Endothelial cell of umbilical vein (primary cell): ENCODE measurements at regions of chr2 and their contacts with region 1.

Region 1: DNA sequence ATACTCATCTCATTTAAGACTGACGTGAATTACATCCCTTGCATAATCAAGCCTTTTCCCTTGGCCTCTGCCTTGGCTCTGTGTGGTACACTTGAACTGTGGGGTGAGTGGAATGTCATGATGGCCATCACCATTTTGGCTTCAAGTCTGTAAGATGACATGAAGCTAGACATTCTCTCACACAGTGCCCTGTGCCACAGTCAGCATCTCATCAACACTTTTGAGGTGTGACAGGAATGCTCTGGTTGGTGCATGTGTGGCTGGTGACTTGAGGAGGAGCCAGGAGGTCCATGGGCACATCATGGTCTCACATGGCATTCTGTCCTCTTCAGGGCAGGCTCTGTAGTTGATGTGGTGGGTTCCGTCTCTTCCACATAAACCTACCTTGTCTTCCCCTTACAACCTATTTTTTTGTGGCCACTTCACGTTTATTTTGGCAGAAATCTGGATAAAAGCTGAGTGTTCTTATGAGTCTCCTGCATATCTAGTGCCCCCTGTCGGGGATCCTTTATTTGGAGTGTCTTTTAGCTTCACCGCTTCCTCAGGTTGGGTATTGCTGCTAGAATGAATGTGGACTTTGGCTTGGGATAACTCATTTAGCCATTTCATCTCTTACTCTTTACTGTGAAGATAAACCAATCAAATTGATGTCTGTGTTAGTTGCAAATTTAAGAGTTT is 28.1 kb downstream of the MAP4K4 start:
- DNase-seq: no peak
- H3K4me3 ChIP-seq: no peak overlapping the region
- H3K27ac ChIP-seq: no peak overlapping the region
- H3K4me1 ChIP-seq: peaks cover 3% of the 10 kb centered on the region
- H3K27me3 ChIP-seq: no peaks in the 10 kb centered on the region
- CTCF ChIP-seq: peak in 1 of 2 donors; percentile 10
- POLR2A ChIP-seq: no peak

Region 2: GRCh38 chr2:101613056-101613704 is 112.5 kb before region 1 on chr2:
- CTCF ChIA-PET with region 1: no interaction called
- POLR2A ChIA-PET with region 1: no interaction called
- dilution Hi-C with region 1: no loop called
- intact Hi-C with region 1: no loop called
- DNase-seq: no peak
- H3K4me3 ChIP-seq: no peak overlapping the region
- H3K27ac ChIP-seq: no peak overlapping the region
- H3K4me1 ChIP-seq: no peaks in the 10 kb centered on the region
- H3K27me3 ChIP-seq: peaks cover 0 to 2% of the 10 kb centered on the region in 2 experiments
- CTCF ChIP-seq: no peak
- POLR2A ChIP-seq: no peak

Region 3: DNA sequence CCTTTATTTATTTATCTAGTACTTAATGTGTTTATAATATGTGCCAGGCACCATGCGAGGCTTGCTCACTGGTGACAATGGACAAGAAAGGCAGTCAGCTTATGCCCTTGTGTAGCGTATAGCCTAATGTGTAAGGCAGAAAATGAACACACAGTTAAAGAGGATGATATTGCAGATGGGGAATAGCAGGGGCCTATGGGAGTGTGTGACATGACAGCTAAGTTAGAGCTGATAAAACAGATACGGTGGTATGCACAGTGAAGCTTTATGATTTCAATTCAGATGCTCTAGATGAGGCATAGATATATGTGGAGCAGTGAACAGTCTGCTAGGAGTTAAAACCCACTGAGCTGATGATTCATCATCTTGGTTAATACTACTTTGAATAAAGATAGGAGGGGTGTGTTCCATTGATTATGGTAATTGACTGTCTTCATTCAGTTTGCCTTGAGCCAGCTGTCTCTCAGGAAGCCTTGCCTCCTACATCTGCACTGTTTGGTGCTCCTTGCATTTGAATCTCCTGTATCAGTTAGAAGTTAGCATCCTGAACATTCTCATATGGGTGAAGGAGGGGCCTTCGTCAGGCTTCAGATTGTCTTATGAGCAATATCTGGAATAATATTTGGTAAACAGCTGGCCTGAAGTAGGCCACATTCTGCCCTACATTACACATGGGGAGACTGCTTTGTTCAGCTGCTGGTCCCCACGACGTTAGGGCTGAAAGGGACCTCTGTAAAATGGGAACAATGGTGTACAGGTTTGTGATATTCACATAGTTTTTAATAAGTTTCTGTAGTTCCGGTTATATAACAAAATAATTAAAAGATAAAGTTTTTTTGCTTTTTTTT is 15.0 kb before region 1 on chr2:
- CTCF ChIA-PET with region 1: interaction called, 17 read pairs
- POLR2A ChIA-PET with region 1: no interaction called
- dilution Hi-C with region 1: no loop called
- intact Hi-C with region 1: no loop called
- DNase-seq: peak; percentile 28
- H3K4me3 ChIP-seq: no peak overlapping the region
- H3K27ac ChIP-seq: no peak overlapping the region
- H3K4me1 ChIP-seq: peaks cover 30% of the 10 kb centered on the region
- H3K27me3 ChIP-seq: no peaks in the 10 kb centered on the region
- CTCF ChIP-seq: no peak
- POLR2A ChIP-seq: no peak

Region 4: GRCh38 chr2:101736861-101737291 is 11.2 kb after region 1 on chr2:
- CTCF ChIA-PET with region 1: interaction called, 12 read pairs
- POLR2A ChIA-PET with region 1: no interaction called
- dilution Hi-C with region 1: no loop called
- intact Hi-C with region 1: loop called (anchors 2 kb)
- DNase-seq: peak; percentile 62
- H3K4me3 ChIP-seq: no peak overlapping the region
- H3K27ac ChIP-seq: no peak overlapping the region
- H3K4me1 ChIP-seq: peaks cover 45% of the 10 kb centered on the region
- H3K27me3 ChIP-seq: no peaks in the 10 kb centered on the region
- CTCF ChIP-seq: no peak
- POLR2A ChIP-seq: no peak

Region 5: GRCh38 chr2:101860157-101860556 is 134.5 kb after region 1 on chr2:
- CTCF ChIA-PET with region 1: no interaction called
- POLR2A ChIA-PET with region 1: no interaction called
- dilution Hi-C with region 1: no loop called
- intact Hi-C with region 1: no loop called
- DNase-seq: no peak
- H3K4me3 ChIP-seq: no peak overlapping the region
- H3K27ac ChIP-seq: no peak overlapping the region
- H3K4me1 ChIP-seq: peaks cover 22% of the 10 kb centered on the region
- H3K27me3 ChIP-seq: no peaks in the 10 kb centered on the region
- CTCF ChIP-seq: no peak
- POLR2A ChIP-seq: no peak